MCF 10A (cell line): ENCODE measurements at regions of chr17 and their contacts with region 1.

Region 1: DNA sequence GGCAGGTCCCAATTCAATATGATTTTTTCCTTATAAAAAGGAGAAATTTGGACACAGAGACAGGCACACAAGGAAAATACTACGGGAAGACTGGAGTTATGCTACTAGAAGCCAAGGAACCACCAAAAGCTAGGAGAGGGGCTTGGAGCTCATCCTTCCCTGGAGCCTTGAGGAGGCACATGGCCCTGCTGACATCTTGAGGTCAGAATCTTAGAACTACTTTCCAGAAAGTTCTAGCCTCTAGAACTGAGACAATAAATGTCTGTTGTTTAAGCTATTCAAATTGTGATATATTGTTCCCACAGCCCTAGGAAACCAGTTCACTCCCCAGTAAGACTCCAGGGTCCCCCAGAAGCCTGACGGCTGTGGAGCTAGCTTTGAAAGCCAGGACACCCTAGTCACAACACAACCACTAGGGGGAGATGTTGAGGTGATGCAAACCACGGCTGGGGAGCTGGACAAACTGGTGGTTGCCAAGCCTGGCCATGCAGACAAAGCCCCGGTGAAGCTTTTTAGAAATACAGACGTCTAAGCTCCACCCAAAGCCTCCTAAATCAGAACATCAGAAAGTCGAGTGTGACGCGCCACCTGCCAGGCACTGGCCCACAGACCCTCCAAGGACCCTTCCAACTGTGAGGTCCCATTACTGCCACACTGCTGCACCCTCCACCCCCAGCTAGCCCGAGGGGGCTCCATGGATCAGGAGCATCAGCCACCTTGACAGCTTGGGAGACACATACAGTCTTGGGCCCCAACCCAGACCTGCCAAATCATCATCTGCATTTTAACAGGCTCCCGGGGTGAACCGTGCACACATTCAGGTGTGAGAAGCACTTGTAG is 106.4 kb downstream of the SLC39A11 start:
- DNase-seq: peak; percentile 82
- H3K4me3 Mint-ChIP-seq: no peak overlapping the region
- H3K27ac Mint-ChIP-seq: no peak overlapping the region
- H3K4me1 Mint-ChIP-seq: no peaks in the 10 kb centered on the region
- H3K27me3 Mint-ChIP-seq: no peaks in the 10 kb centered on the region
- CTCF ChIP-seq: peak; percentile 84

Region 2: GRCh38 chr17:72974605-72975232 is 11.4 kb before region 1 on chr17:
- CTCF ChIA-PET with region 1: interaction called, 10 read pairs
- POLR2A ChIA-PET with region 1: no interaction called
- intact Hi-C with region 1: no loop called
- DNase-seq: no peak
- H3K4me3 Mint-ChIP-seq: no peak overlapping the region
- H3K27ac Mint-ChIP-seq: no peak overlapping the region
- H3K4me1 Mint-ChIP-seq: peaks cover 16% of the 10 kb centered on the region
- H3K27me3 Mint-ChIP-seq: no peaks in the 10 kb centered on the region
- CTCF ChIP-seq: no peak

Region 3: GRCh38 chr17:73156166-73156840 is 170.2 kb after region 1 on chr17:
- CTCF ChIA-PET with region 1: interaction called, 3 read pairs
- POLR2A ChIA-PET with region 1: interaction called, 4 read pairs
- intact Hi-C with region 1: loop called (anchors 1 kb)
- DNase-seq: peak; percentile 68
- H3K4me3 Mint-ChIP-seq: no peak overlapping the region
- H3K27ac Mint-ChIP-seq: no peak overlapping the region
- H3K4me1 Mint-ChIP-seq: no peaks in the 10 kb centered on the region
- H3K27me3 Mint-ChIP-seq: peaks cover 26% of the 10 kb centered on the region
- CTCF ChIP-seq: peak; percentile 55